WTC11 (cell line): ENCODE measurements at regions of chr15 and their contacts with region 1.

Region 1: DNA sequence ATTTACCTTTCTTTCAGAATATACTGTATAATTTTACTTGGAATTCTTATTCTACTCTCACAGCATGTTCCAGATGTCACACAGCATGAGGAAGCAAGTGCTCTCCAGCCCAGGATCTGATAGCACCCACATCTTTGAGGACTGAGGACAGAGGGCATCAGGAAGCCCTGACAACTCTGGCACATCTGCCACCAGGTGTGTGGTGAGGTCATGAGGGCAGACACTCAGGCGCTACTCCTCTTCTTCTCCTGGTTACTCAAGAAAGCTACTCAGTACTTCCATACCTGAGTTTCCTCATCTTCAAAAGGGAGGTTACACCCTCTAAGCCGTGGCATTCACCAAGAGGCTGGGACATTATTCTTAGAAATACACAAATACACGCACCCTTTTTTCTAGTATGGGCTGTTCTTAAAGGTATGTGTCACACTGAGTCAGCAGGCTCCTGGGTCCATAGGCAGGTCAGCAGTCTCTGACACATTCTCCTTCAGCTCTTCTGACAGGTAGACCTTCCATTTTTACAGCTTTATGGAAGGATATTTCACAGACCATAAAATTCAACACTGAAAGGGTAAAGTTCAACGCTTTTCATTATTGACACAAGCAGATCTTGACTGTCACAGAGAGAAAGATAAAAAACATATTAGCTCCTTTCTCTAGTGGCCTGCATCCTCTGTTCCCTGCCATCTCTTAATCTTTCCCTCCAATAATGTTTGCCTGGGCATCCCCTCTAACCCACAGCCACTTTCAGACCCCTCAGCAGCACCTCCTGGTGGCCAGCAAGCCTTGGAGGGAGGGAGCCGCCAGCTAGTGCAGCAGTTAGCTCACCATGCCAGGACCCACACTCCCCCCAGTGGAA is 103.2 kb upstream of the TJP1 start:
- DNase-seq: peak; percentile 91
- ATAC-seq: peak; percentile 72
- H3K4me3 Mint-ChIP-seq: no peak overlapping the region
- H3K27ac Mint-ChIP-seq: peak overlapping the region; percentile 96; the same call in 1 of the 2 replicates
- H3K4me1 Mint-ChIP-seq: peaks cover 39% of the 10 kb centered on the region
- H3K27me3 Mint-ChIP-seq: no peaks in the 10 kb centered on the region
- CTCF ChIP-seq: peak; percentile 74

Region 2: GRCh38 chr15:29668120-29668602 is 257.3 kb before region 1 on chr15:
- CTCF ChIA-PET with region 1: interaction called, 23 read pairs
- POLR2A ChIA-PET with region 1: no interaction called
- DNase-seq: peak; percentile 83
- ATAC-seq: peak; percentile 97
- H3K4me3 Mint-ChIP-seq: no peak overlapping the region
- H3K27ac Mint-ChIP-seq: no peak overlapping the region
- H3K4me1 Mint-ChIP-seq: peaks cover 19% of the 10 kb centered on the region
- H3K27me3 Mint-ChIP-seq: 0 out of 2 replicates have a peak, but pooled peaks cover 2% of the 10 kb centered on the region
- CTCF ChIP-seq: peak; percentile 68

Region 3: GRCh38 chr15:29740692-29741311 is 184.7 kb before region 1 on chr15:
- CTCF ChIA-PET with region 1: interaction called, 26 read pairs
- POLR2A ChIA-PET with region 1: no interaction called
- DNase-seq: no peak
- ATAC-seq: peak; percentile 59; the same call in 1 of the 2 replicates
- H3K4me3 Mint-ChIP-seq: no peak overlapping the region
- H3K27ac Mint-ChIP-seq: no peak overlapping the region
- H3K4me1 Mint-ChIP-seq: no peaks in the 10 kb centered on the region
- H3K27me3 Mint-ChIP-seq: no peaks in the 10 kb centered on the region
- CTCF ChIP-seq: no peak

Region 4: GRCh38 chr15:29835301-29835700 is 90.2 kb before region 1 on chr15:
- CTCF ChIA-PET with region 1: interaction called, 16 read pairs
- POLR2A ChIA-PET with region 1: no interaction called
- DNase-seq: no peak
- ATAC-seq: no peak
- H3K4me3 Mint-ChIP-seq: no peak overlapping the region
- H3K27ac Mint-ChIP-seq: no peak overlapping the region
- H3K4me1 Mint-ChIP-seq: 0 out of 2 replicates have a peak, but pooled peaks cover 4% of the 10 kb centered on the region
- H3K27me3 Mint-ChIP-seq: no peaks in the 10 kb centered on the region; the same call in 1 of the 2 replicates
- CTCF ChIP-seq: no peak

Region 5: DNA sequence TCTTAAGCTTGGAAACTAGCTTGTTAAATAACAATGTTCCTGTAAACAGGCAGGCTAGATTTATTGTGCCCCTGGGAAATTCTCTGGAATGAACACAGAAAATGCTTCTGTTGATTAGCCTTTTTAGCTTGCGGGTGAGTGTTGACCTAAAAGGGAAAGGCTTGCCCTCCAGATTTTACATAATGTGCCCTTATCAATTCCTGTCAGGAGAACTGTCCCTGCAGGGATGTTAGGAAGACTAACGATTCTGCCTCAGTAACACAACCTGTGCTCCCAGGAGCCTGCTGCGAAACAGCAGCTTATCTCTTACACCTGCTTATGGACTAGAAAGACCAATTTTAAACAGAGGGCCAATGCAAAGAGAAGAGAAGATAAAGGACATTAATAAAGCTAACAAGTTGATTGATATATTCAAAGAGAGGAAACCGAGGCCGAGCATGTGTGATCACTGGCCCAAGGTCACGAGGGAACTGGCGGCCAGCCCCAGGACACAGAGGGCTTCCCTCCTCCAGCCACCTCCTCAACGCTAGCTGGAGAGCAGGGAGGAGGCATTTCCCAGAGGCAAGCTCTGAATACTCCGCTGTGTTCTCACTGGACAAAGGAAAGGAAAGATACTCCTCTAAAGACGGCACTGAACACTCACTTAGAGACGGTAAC is 54.8 kb before region 1 on chr15:
- CTCF ChIA-PET with region 1: interaction called, 40 read pairs
- POLR2A ChIA-PET with region 1: interaction called, 4 read pairs
- DNase-seq: no peak
- ATAC-seq: peak; percentile 30; the same call in 1 of the 2 replicates
- H3K4me3 Mint-ChIP-seq: no peak overlapping the region
- H3K27ac Mint-ChIP-seq: peak overlapping the region; percentile 6; the same call in 1 of the 2 replicates
- H3K4me1 Mint-ChIP-seq: peaks cover 20% of the 10 kb centered on the region
- H3K27me3 Mint-ChIP-seq: no peaks in the 10 kb centered on the region
- CTCF ChIP-seq: no peak

Region 6: GRCh38 chr15:29900237-29901189 is 24.9 kb before region 1 on chr15:
- CTCF ChIA-PET with region 1: interaction called, 11 read pairs
- POLR2A ChIA-PET with region 1: no interaction called
- DNase-seq: no peak
- ATAC-seq: no peak
- H3K4me3 Mint-ChIP-seq: no peak overlapping the region
- H3K27ac Mint-ChIP-seq: 0 out of 2 replicates have a peak overlapping the region, but pooled peaks have one; percentile 1
- H3K4me1 Mint-ChIP-seq: peaks cover 21% of the 10 kb centered on the region
- H3K27me3 Mint-ChIP-seq: peaks cover 5% of the 10 kb centered on the region
- CTCF ChIP-seq: no peak

Region 7: DNA sequence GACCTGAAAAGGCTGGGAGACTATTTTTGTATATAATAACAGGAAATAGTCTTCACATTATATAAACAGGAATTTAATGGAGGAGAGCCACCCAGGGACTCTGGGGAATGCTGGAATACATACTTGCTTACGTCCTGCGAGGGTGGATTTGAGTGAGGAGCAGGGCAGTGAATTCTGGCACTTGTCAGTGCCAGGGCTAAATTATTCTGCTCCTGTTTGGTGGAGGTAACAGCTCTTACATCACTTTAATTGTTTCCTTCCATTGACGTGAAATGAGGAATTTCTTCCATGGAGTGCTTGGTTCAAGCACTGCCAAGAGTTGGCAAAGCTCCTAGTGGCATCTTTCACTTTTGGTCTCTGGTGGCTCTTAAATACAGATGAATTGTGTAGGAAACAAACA is 63.2 kb after region 1 on chr15:
- CTCF ChIA-PET with region 1: interaction called, 17 read pairs
- POLR2A ChIA-PET with region 1: no interaction called
- DNase-seq: no peak
- ATAC-seq: no peak
- H3K4me3 Mint-ChIP-seq: no peak overlapping the region
- H3K27ac Mint-ChIP-seq: 0 out of 2 replicates have a peak overlapping the region, but pooled peaks have one; percentile 13
- H3K4me1 Mint-ChIP-seq: peaks cover 47% of the 10 kb centered on the region
- H3K27me3 Mint-ChIP-seq: no peaks in the 10 kb centered on the region
- CTCF ChIP-seq: no peak